A549 (cell line): ENCODE measurements at regions of chr13 and their contacts with region 1.

Region 1: DNA sequence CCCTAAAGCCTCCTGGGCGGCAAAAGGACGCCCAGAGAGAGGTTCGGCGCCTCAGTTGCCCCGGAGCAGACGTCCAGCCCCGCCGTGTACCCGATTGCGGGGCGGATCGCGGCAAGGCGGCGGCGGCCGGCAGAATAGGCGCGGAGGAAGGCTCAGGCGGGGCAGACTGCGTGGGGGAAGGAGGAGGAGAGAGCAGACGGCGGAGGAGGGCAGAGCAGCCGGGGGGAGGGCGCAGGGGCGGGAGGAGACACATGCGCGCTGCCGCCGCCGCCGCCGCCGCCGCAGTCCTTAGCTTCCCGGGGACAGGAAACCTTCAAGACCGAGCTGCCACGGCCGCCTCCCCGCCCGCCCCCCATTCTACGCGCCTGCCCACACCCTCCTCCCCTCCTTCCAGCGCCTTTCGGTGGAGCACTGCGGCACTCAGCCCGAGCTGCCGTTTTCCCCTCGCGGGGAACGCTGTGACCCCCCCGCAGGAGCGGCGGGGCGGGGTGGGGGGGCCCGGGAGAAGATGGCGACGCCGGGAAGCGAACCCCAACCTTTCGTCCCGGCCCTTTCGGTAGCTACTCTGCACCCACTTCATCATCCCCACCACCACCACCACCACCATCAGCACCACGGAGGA is at the start of gene LRCH1:
- DNase-seq: peak; percentile 66 to 87
- ATAC-seq: peak; percentile 87 to 91
- H3K4me3 ChIP-seq: peak within 1 kb of the TSS; percentile 92
- H3K27ac ChIP-seq: peak within 1 kb of the TSS; percentile 89 to 95
- H3K4me1 ChIP-seq: peaks cover 27% of the 10 kb centered on the region
- CTCF ChIP-seq: no peak
- EP300 ChIP-seq: no peak
- POLR2A ChIP-seq: peak; percentile 22; the same call in 1 of the 2 replicates
- RAD21 ChIP-seq: peak in 1 of 2 experiments; percentile 16; a peak in 1 of 5 replicates
- polyA plus RNA-seq, gene LRCH1: 16.4 and 21.9 TPM in 2 replicates

Region 2: GRCh38 chr13:46542833-46543232 is 10.2 kb before region 1 on chr13:
- CTCF ChIA-PET with region 1: interaction called, 24 read pairs
- POLR2A ChIA-PET with region 1: no interaction called
- DNase-seq: no peak
- ATAC-seq: no peak
- H3K4me3 ChIP-seq: no peak overlapping the region
- H3K27ac ChIP-seq: no peak overlapping the region
- H3K4me1 ChIP-seq: peaks cover 30% of the 10 kb centered on the region
- CTCF ChIP-seq: no peak
- EP300 ChIP-seq: no peak
- POLR2A ChIP-seq: no peak
- RAD21 ChIP-seq: no peak

Region 3: DNA sequence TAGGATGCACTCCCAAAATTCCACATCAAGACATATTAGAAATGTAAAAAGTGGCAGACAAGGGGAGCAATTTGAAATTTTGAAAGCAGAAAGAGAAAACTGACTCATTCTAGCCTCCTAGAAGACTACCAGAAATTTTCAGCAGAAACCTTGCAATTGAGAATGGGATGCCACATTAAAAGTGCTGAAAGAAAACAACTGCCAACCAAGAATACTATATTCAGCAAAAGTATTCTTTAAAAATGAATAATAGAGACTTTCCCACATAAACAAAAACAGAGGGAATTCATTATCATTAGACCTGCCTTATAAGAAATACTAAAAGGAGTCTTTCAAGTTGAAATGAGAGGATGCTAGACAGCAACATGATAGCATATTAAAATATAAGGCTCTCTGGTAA is 422.2 kb after region 1 on chr13:
- CTCF ChIA-PET with region 1: no interaction called
- POLR2A ChIA-PET with region 1: no interaction called
- DNase-seq: no peak
- ATAC-seq: no peak
- H3K4me3 ChIP-seq: no peak overlapping the region
- H3K27ac ChIP-seq: no peak overlapping the region
- H3K4me1 ChIP-seq: no peaks in the 10 kb centered on the region
- CTCF ChIP-seq: no peak
- EP300 ChIP-seq: no peak
- POLR2A ChIP-seq: no peak
- RAD21 ChIP-seq: no peak